OCI-LY7 (cell line): ENCODE measurements at regions of chr13 and their contacts with region 1.

Region 1: DNA sequence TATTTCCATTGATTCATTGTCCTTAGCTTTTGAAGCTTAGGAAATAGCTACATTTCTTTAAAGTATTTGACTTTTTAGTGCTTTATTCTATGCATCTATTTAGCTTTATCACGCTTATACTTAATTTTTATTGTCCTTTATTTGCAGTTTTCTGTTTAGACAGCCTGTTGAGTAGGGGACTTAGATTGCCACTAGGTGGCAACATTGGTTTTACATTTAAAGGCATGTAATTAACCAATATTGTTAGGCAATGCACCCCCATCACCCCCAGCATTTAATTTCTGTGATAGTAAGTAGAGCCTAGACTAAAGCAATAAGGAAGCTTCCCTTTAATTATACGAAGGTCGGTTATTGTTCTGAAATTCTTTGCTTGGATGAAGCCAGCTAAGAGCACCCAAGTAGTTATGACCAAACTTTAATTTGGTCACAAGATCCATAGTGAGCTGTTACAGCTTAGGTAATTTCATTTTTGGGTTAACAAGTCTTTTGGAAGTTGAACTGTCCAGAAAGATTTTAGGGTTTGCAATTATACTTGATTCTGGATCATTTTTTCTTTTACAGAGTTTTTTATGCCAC is 36.5 kb downstream of the B3GLCT start:
- DNase-seq: peak; percentile 84
- H3K4me3 ChIP-seq: no peak overlapping the region
- H3K27ac ChIP-seq: no peak overlapping the region
- H3K4me1 ChIP-seq: peaks cover 15% of the 10 kb centered on the region
- CTCF ChIP-seq: peak; percentile 97

Region 2: GRCh38 chr13:31248965-31249539 is 12.8 kb after region 1 on chr13:
- CTCF ChIA-PET with region 1: interaction called, 5 read pairs
- POLR2A ChIA-PET with region 1: interaction called, 14 read pairs
- intact Hi-C with region 1: no loop called
- DNase-seq: no peak
- H3K4me3 ChIP-seq: no peak overlapping the region
- H3K27ac ChIP-seq: no peak overlapping the region
- H3K4me1 ChIP-seq: peaks cover 2% of the 10 kb centered on the region
- CTCF ChIP-seq: no peak

Region 3: GRCh38 chr13:31322026-31322425 is 85.7 kb after region 1 on chr13:
- CTCF ChIA-PET with region 1: interaction called, 4 read pairs
- POLR2A ChIA-PET with region 1: interaction called, 6 read pairs
- intact Hi-C with region 1: loop called (anchors 2 kb)
- DNase-seq: peak; percentile 41
- H3K4me3 ChIP-seq: peak overlapping the region; percentile 55
- H3K27ac ChIP-seq: peak overlapping the region; percentile 98
- H3K4me1 ChIP-seq: peaks cover 78% of the 10 kb centered on the region
- CTCF ChIP-seq: no peak

Region 4: GRCh38 chr13:31372454-31372853 is 136.2 kb after region 1 on chr13:
- CTCF ChIA-PET with region 1: interaction called, 6 read pairs
- POLR2A ChIA-PET with region 1: no interaction called
- intact Hi-C with region 1: loop called (anchors 1 kb)
- DNase-seq: peak; percentile 71
- H3K4me3 ChIP-seq: no peak overlapping the region
- H3K27ac ChIP-seq: no peak overlapping the region
- H3K4me1 ChIP-seq: peaks cover 15% of the 10 kb centered on the region
- CTCF ChIP-seq: peak; percentile 71

Region 5: GRCh38 chr13:31409678-31410356 is 173.5 kb after region 1 on chr13:
- CTCF ChIA-PET with region 1: interaction called, 3 read pairs
- POLR2A ChIA-PET with region 1: interaction called, 10 read pairs
- intact Hi-C with region 1: loop called (anchors 1 kb)
- DNase-seq: peak; percentile 78
- H3K4me3 ChIP-seq: no peak overlapping the region
- H3K27ac ChIP-seq: no peak overlapping the region
- H3K4me1 ChIP-seq: peaks cover 10% of the 10 kb centered on the region
- CTCF ChIP-seq: peak; percentile 78

Region 6: DNA sequence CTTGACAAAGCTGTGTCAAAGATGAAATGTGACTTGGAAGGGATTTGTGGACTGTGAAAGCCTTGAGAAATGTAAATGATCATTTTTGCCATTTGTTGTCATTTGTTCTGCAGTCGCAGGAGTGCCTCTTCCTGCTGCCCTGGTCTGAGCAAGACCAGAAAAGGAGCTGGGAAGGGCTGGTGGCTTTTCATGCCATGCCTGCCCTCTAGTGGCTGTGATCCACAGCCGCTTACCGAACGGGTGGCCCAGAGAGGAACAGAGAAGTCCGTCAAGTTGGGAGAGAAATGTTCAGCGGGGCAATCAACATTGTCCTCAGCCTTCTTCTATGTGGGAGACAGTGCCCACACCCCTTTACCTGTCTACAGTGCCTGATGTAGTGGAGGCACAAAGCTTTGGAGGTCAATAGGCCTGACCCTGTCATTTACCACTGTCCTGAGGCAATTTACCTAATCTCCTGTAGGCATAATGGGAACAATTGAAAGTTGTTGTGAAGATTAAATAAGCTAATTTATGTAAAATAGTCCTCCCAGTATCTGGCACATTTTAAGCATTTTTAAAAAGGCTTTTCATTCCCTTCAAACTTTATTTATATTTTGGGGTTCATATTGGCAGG is 187.9 kb after region 1 on chr13:
- CTCF ChIA-PET with region 1: interaction called, 26 read pairs
- POLR2A ChIA-PET with region 1: interaction called, 4 read pairs
- intact Hi-C with region 1: loop called (anchors 1 kb)
- DNase-seq: peak; percentile 88
- H3K4me3 ChIP-seq: no peak overlapping the region
- H3K27ac ChIP-seq: no peak overlapping the region
- H3K4me1 ChIP-seq: peaks cover 9% of the 10 kb centered on the region
- CTCF ChIP-seq: peak; percentile 97

Region 7: GRCh38 chr13:31742097-31742734 is 505.9 kb after region 1 on chr13:
- CTCF ChIA-PET with region 1: no interaction called
- POLR2A ChIA-PET with region 1: no interaction called
- intact Hi-C with region 1: loop called (anchors 1 kb)
- DNase-seq: peak; percentile 64
- H3K4me3 ChIP-seq: no peak overlapping the region
- H3K27ac ChIP-seq: no peak overlapping the region
- H3K4me1 ChIP-seq: no peaks in the 10 kb centered on the region
- CTCF ChIP-seq: peak; percentile 98